Activated B cell treated with CpG ODN at 0.5 μM for 24 hours (primary cell): ENCODE measurements at regions of chr16 and their contacts with region 1.

Region 1: GRCh38 chr16:80671281-80671849 is 130.6 kb downstream of the DYNLRB2 start:
- DNase-seq: no peak
- ATAC-seq: peak; percentile 64
- H3K4me3 Mint-ChIP-seq: peak overlapping the region; percentile 67
- H3K27ac Mint-ChIP-seq: peak overlapping the region; percentile 75
- H3K4me1 Mint-ChIP-seq: peaks cover 57% of the 10 kb centered on the region
- H3K27me3 Mint-ChIP-seq: peaks cover 10% of the 10 kb centered on the region
- CTCF ChIP-seq: no peak

Region 2: GRCh38 chr16:78749745-78750268 is 1921.6 kb before region 1 on chr16:
- CTCF ChIA-PET with region 1: no interaction called
- POLR2A ChIA-PET with region 1: no interaction called
- intact Hi-C with region 1: loop called (anchors 10 kb)
- DNase-seq: no peak
- ATAC-seq: peak; percentile 57
- H3K4me3 Mint-ChIP-seq: peak overlapping the region; percentile 51
- H3K27ac Mint-ChIP-seq: peak overlapping the region; percentile 87
- H3K4me1 Mint-ChIP-seq: peaks cover 74% of the 10 kb centered on the region
- H3K27me3 Mint-ChIP-seq: no peaks in the 10 kb centered on the region
- CTCF ChIP-seq: no peak

Region 3: GRCh38 chr16:80346111-80346632 is 325.2 kb before region 1 on chr16:
- CTCF ChIA-PET with region 1: no interaction called
- POLR2A ChIA-PET with region 1: no interaction called
- intact Hi-C with region 1: loop called (anchors 5 kb)
- DNase-seq: no peak
- ATAC-seq: peak; percentile 88
- H3K4me3 Mint-ChIP-seq: no peak overlapping the region
- H3K27ac Mint-ChIP-seq: no peak overlapping the region
- H3K4me1 Mint-ChIP-seq: peaks cover 8% of the 10 kb centered on the region
- H3K27me3 Mint-ChIP-seq: peaks cover 6% of the 10 kb centered on the region
- CTCF ChIP-seq: no peak

Region 4: GRCh38 chr16:80580109-80580832 is 91.1 kb before region 1 on chr16:
- CTCF ChIA-PET with region 1: no interaction called
- POLR2A ChIA-PET with region 1: no interaction called
- intact Hi-C with region 1: loop called (anchors 1 kb)
- DNase-seq: no peak
- ATAC-seq: peak; percentile 87
- H3K4me3 Mint-ChIP-seq: no peak overlapping the region
- H3K27ac Mint-ChIP-seq: peak overlapping the region; percentile 54
- H3K4me1 Mint-ChIP-seq: peaks cover 16% of the 10 kb centered on the region
- H3K27me3 Mint-ChIP-seq: no peaks in the 10 kb centered on the region
- CTCF ChIP-seq: no peak

Region 5: GRCh38 chr16:80725566-80726162 is 54.3 kb after region 1 on chr16:
- CTCF ChIA-PET with region 1: no interaction called
- POLR2A ChIA-PET with region 1: no interaction called
- intact Hi-C with region 1: no loop called
- DNase-seq: no peak
- ATAC-seq: no peak
- H3K4me3 Mint-ChIP-seq: no peak overlapping the region
- H3K27ac Mint-ChIP-seq: no peak overlapping the region
- H3K4me1 Mint-ChIP-seq: peaks cover 6% of the 10 kb centered on the region
- H3K27me3 Mint-ChIP-seq: no peaks in the 10 kb centered on the region
- CTCF ChIP-seq: no peak

Region 6: GRCh38 chr16:80804056-80804450 is 132.7 kb after region 1 on chr16:
- CTCF ChIA-PET with region 1: no interaction called
- POLR2A ChIA-PET with region 1: no interaction called
- intact Hi-C with region 1: loop called (anchors 5 kb)
- DNase-seq: peak; percentile 42
- ATAC-seq: peak; percentile 54
- H3K4me3 Mint-ChIP-seq: peak overlapping the region; percentile 92
- H3K27ac Mint-ChIP-seq: no peak overlapping the region
- H3K4me1 Mint-ChIP-seq: peaks cover 4% of the 10 kb centered on the region
- H3K27me3 Mint-ChIP-seq: peaks cover 5% of the 10 kb centered on the region
- CTCF ChIP-seq: no peak

Region 7: GRCh38 chr16:81314603-81315270 is 643.4 kb after region 1 on chr16 and contains the start of gene GAN:
- CTCF ChIA-PET with region 1: no interaction called
- POLR2A ChIA-PET with region 1: no interaction called
- intact Hi-C with region 1: loop called (anchors 10 kb)
- DNase-seq: peak; percentile 89
- ATAC-seq: peak; percentile 95
- H3K4me3 Mint-ChIP-seq: peak within 1 kb of the TSS; percentile 96
- H3K27ac Mint-ChIP-seq: peak within 1 kb of the TSS; percentile 91
- H3K4me1 Mint-ChIP-seq: peaks cover 29% of the 10 kb centered on the region
- H3K27me3 Mint-ChIP-seq: no peaks in the 10 kb centered on the region
- CTCF ChIP-seq: no peak
- total RNA-seq, gene GAN: 5.1 and 8.6 TPM in 2 replicates